ENCODE measurements at regions of chr3 and their contacts with region 1.

Region 1: DNA sequence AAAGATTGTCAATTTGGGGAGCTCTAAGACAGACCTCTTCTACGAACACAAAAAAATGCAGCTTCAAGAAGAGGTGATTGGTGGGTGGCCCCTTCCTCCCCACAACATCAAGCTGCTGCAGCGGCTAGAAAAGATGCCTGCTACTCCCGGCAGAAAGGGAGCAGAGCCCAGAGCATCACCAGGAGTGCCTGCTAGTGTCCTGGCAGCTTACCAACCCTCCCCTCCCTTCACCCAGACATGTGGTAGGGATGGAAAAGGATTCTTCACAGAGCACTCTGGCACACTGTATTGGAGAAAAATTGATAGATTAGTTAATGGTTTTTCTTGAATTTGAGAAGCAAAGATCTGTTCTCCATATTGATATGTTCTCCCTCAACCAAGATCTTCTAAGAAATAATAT is 10.8 kb downstream of the IP6K1 start:
- DNase-seq: no peak
- ATAC-seq: no peak
- H3K4me3 ChIP-seq: no peak overlapping the region
- H3K27ac ChIP-seq: no peak overlapping the region
- H3K4me1 ChIP-seq: no peaks in the 10 kb centered on the region; a peak in 2 of 5 replicates
- H3K27me3 ChIP-seq: no peaks in the 10 kb centered on the region
- CTCF ChIP-seq: no peak
- EP300 ChIP-seq: no peak
- POLR2A ChIP-seq: no peak
- RAD21 ChIP-seq: no peak

Region 2: GRCh38 chr3:49757197-49757596 is 18.3 kb before region 1 on chr3:
- CTCF ChIA-PET with region 1: no interaction called
- POLR2A ChIA-PET with region 1: interaction called, 12 read pairs
- in situ Hi-C with region 1: no loop called
- intact Hi-C with region 1: no loop called
- DNase-seq: peak in 1 of 4 experiments; percentile 22
- ATAC-seq: peak; percentile 66
- H3K4me3 ChIP-seq: no peak overlapping the region
- H3K27ac ChIP-seq: no peak overlapping the region
- H3K4me1 ChIP-seq: no peaks in the 10 kb centered on the region; a peak in 2 of 5 replicates
- H3K27me3 ChIP-seq: no peaks in the 10 kb centered on the region
- CTCF ChIP-seq: no peak
- EP300 ChIP-seq: no peak
- POLR2A ChIP-seq: no peak
- RAD21 ChIP-seq: no peak

Measured in K562 (cell line).